Activated CD8-positive, alpha-beta T cell treated with anti-CD3 and anti-CD28 coated beads, Interleukin-2, amount 10 ng/mL, durations not matched to agents 7 days and 5 days (primary cell): ENCODE measurements at regions of chr2 and their contacts with region 1.

Region 1: DNA sequence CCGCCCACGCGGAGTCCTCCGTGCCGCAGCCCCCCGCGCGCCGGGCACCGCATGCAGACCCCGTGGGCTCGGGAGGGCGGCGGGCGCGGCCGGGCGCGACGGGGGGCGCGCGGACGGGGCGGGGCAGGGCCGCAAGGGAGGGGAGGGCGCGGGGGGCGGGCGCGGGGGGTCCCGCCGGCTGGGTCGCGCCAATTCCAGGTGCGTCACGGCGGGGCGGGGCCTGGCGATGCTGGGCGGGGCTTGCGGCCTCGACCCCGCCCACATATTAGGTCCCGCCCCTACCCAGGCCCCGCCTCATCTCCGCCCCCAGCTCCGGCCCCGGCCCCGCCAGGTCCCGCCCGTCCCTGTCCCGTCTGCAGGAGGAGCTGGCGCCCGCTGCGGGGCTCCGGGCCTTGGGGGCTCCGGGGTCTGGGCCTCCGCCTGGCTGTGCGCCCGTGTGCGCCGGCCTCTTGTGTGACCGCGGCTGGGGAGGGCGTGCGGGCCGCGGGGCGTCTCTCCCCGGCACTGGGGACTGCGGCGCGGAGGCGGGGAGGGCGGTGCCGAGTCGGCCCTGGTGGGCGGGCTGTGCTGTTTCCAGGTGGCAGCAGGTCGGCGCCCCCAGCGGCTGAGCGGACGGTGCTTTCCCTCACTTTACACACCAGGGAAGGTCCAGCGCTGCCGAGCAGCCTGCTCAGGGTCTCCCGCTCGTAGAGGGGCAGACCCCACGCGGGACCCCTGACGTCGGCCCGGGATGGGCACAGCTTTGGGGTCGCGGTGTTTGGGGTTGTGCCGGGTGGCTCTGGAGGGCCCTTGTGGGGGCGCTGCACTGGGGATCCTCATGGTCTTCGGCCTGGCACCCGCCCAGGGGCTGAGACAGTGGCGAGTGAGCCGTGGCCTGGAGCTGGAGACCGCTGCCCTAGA is 543 bp downstream of the ING5 start:
- DNase-seq: peak; percentile 92
- ATAC-seq: peak; percentile 80
- H3K4me3 Mint-ChIP-seq: peak overlapping the region; percentile 86
- H3K27ac Mint-ChIP-seq: peak overlapping the region; percentile 81
- H3K4me1 Mint-ChIP-seq: peaks cover 24% of the 10 kb centered on the region
- H3K27me3 Mint-ChIP-seq: no peaks in the 10 kb centered on the region

Region 2: GRCh38 chr2:241686649-241687425 is 15.5 kb before region 1 on chr2 and contains the start of gene DTYMK:
- CTCF ChIA-PET with region 1: interaction called, 22 read pairs
- POLR2A ChIA-PET with region 1: interaction called, 31 read pairs
- DNase-seq: peak; percentile 96
- ATAC-seq: peak; percentile 97
- H3K4me3 Mint-ChIP-seq: peak within 1 kb of the TSS; percentile 90
- H3K27ac Mint-ChIP-seq: peak within 1 kb of the TSS; percentile 97
- H3K4me1 Mint-ChIP-seq: peaks cover 40% of the 10 kb centered on the region
- H3K27me3 Mint-ChIP-seq: no peaks in the 10 kb centered on the region
- total RNA-seq, gene DTYMK: 101 to 103 TPM

Region 3: GRCh38 chr2:241734467-241735208 is 32.3 kb after region 1 on chr2 and contains the start of gene D2HGDH:
- CTCF ChIA-PET with region 1: interaction called, 20 read pairs
- POLR2A ChIA-PET with region 1: interaction called, 20 read pairs
- DNase-seq: peak; percentile 95
- ATAC-seq: peak; percentile 93
- H3K4me3 Mint-ChIP-seq: peak within 1 kb of the TSS; percentile 82
- H3K27ac Mint-ChIP-seq: peak within 1 kb of the TSS; percentile 84
- H3K4me1 Mint-ChIP-seq: peaks cover 61% of the 10 kb centered on the region
- H3K27me3 Mint-ChIP-seq: no peaks in the 10 kb centered on the region
- total RNA-seq, gene D2HGDH: 26.3 to 28.0 TPM